ENCODE measurements at regions of chr1 and their contacts with region 1.

Region 1: DNA sequence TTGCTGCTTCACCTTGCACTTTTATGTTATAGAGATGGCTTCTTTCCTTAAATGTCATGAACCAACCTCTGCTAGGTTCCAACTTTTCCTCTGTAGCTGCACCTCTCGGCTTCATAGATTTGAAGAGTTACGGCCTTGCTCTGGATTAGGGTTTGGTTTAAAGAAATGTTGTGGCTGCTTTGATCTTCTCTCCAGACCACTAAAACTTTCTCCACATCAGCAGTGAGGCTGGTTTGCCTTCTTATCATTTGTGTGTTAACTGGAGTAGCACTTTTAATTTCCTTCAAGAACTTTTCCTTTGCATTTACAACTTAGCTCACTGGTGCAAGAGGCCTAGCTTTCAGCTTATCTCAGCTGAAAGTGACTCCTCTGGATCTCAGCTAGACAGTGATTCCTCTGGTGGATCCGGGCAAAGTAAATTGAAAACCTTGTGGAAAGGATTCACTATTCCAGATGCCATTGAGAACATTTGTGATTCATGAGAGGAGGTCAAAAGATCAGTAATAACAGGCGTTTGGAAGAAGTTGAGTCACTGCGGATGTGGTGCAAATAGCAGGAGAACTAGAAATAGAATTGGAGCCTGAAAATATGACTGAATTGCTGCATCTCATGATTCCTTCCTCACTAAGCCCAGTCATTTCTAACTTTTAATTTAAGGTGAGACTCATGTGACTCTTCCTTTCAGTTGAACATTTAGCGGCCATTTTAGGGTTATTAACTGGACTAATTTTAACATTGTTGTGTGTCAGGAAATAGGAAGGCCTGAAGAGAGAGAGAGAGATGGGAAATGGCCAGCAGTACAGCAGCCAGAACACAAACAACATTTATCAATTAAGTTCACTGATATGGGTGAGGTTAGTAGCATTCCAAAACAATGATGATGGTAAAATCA is 16.2 kb upstream of the RGS1 start:
- H3K4me3 Mint-ChIP-seq: no peak overlapping the region
- H3K27ac Mint-ChIP-seq: no peak overlapping the region
- H3K4me1 Mint-ChIP-seq: peaks cover 4% of the 10 kb centered on the region
- H3K27me3 Mint-ChIP-seq: no peaks in the 10 kb centered on the region

Region 2: GRCh38 chr1:192530254-192530653 is 29.1 kb before region 1 on chr1:
- intact Hi-C with region 1: loop called (anchors 5 kb)
- H3K4me3 Mint-ChIP-seq: no peak overlapping the region
- H3K27ac Mint-ChIP-seq: peak overlapping the region; percentile 83
- H3K4me1 Mint-ChIP-seq: peaks cover 42% of the 10 kb centered on the region
- H3K27me3 Mint-ChIP-seq: no peaks in the 10 kb centered on the region

Measured in dendritic cell treated with granulocyte-macrophage colony-stimulating factor and Interleukin-4, amounts not matched to agents 40 ng/mL and 50 ng/mL, for 4 days (primary cell).